Kidney (tissue), 22 donors: ENCODE measurements at regions of chr2 and their contacts with region 1.

Region 1: DNA sequence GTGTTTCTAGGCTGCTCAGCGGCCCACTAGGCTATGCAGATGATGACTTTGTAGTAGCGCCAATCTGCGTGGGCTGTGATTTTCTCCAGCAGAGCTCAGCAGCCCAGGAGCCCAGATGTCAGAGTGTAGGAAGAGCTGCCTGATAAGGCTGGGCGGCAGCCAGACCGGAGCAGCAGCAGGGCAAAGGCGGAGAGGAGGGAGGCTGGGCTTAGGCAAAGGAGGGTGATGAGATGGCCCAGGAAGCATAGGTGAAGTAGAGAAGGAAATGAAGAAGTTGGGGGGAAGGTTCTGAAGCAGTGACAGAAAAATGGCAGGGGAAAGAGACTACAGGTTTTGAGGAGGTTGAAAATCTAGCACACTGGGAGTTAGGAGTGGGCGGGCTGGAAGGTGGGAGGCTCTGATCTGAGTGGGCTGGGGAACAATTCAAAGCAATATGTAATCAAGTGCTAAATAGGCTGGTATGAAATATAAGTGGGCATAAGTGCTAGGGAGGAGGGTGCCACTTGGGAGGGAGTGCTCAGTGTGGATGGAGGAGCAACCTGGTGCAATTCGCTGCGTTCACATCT is 50.6 kb upstream of the STPG4 start:
- DNase-seq: peak in 3 of 5 donors; percentile 30 to 74 (median 60)
- H3K4me3 ChIP-seq: no peak overlapping the region
- H3K27ac ChIP-seq: no peak overlapping the region
- H3K4me1 ChIP-seq: no peaks in the 10 kb centered on the region
- H3K27me3 ChIP-seq: no peaks in the 10 kb centered on the region
- CTCF ChIP-seq: no peak

Region 2: DNA sequence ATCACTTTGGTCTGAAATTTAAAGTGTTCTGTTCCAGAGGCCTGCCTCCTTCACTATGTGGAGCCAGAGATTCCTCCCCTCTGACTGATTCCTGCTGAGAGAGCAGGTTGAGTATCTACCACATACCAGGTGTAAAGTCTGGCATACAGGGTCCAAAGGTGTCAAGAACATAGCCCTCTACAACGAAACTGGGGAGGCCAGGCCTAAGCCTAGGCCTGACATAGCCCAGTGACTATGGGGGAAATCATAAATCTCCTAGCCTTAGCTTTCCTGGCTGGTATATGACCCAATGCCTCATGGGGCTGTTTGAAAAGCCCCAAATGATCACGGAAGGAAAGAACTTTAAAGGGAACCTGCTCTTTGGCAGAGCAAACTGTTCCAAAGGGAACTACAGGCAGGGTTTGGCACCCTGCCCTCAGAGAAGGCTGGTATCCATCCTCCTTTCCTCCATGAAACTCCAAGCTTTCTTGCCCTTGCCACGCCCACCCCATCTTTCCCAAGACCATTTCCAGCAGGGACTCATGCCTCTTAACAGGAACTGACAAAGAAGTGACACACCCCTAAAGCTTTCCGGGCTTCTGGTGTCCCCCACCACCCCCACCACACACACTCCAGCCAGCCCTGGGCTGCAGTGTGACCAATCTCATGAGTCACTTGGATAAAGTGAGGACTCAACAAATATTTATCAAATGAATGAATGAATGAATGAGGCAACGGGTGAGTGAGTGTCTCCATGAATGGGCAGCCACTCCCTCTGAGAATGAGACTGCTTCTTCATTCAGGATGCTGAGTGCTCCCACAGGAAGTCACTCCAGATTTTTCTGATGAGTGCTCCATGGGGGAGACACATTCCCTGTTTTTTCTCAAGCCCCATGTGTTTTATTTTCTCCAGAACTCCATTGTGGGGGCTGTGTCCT is 63.9 kb after region 1 on chr2:
- intact Hi-C with region 1: loop called (anchors 10 kb)
- DNase-seq: peak in 1 of 5 donors; percentile 86
- H3K4me3 ChIP-seq: no peak overlapping the region
- H3K27ac ChIP-seq: no peak overlapping the region
- H3K4me1 ChIP-seq: peaks cover 0 to 21% (median 14%) of the 10 kb centered on the region in 3 donors
- H3K27me3 ChIP-seq: no peaks in the 10 kb centered on the region
- CTCF ChIP-seq: no peak